ENCODE measurements at regions of chr7 and their contacts with region 1.

Region 1: GRCh38 chr7:151408839-151409666 is 785 bp downstream of the WDR86 start:
- DNase-seq: peak in 1 of 2 experiments; percentile 75
- H3K4me3 ChIP-seq: peak overlapping the region; percentile 69 to 84 (median 80)
- H3K27ac ChIP-seq: no peak overlapping the region
- H3K4me1 ChIP-seq: peaks cover 0 to 22% (median 16%) of the 10 kb centered on the region in 4 experiments; a peak in 6 of 7 replicates
- H3K27me3 ChIP-seq: peaks cover 0 to 25% (median 15%) of the 10 kb centered on the region in 4 experiments; a peak in 5 of 7 replicates
- CTCF ChIP-seq: no peak
- EP300 ChIP-seq: no peak
- POLR2A ChIP-seq: peak in 1 of 2 experiments; percentile 37; a peak in 2 of 3 replicates
- RAD21 ChIP-seq: no peak

Region 2: DNA sequence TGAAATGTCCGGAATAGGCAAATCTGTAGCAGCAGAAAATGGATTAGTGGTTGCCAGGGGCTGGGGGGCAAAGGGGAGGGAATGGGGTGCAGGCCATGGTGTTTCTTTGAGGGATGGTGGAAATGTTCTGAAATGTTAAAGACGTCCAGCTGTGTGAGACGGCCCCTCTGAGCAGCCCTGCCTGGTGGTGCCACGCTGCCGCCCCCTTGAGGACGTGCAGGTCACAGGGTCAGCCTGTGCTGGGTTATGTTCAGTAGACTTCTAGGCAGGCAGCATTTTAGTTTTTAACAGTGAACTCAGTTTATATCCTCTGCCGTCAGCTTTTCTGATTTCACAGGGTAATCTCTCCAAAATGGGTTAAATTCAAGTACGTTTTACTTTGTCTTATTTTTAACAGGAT is 58.0 kb before region 1 on chr7:
- CTCF ChIA-PET with region 1: no interaction called
- POLR2A ChIA-PET with region 1: no interaction called
- DNase-seq: peak in 1 of 2 experiments; percentile 77
- H3K4me3 ChIP-seq: no peak overlapping the region
- H3K27ac ChIP-seq: no peak overlapping the region
- H3K4me1 ChIP-seq: no peaks in the 10 kb centered on the region
- H3K27me3 ChIP-seq: no peaks in the 10 kb centered on the region
- CTCF ChIP-seq: peak; percentile 76 to 95 (median 79)
- EP300 ChIP-seq: no peak
- POLR2A ChIP-seq: no peak
- RAD21 ChIP-seq: peak; percentile 54 to 61

Region 3: GRCh38 chr7:151439855-151440798 is 31.1 kb after region 1 on chr7 and contains the start of gene CRYGN:
- CTCF ChIA-PET with region 1: interaction called, 11 read pairs
- POLR2A ChIA-PET with region 1: interaction called, 7 read pairs
- DNase-seq: peak in 1 of 2 experiments; percentile 79
- H3K4me3 ChIP-seq: peak within 1 kb of the TSS; percentile 37 to 66 (median 57)
- H3K27ac ChIP-seq: no peak within 1 kb of the TSS; the same call in 1 of the 2 replicates
- H3K4me1 ChIP-seq: peaks cover 0 to 17% (median 6%) of the 10 kb centered on the region in 4 experiments; a peak in 6 of 7 replicates
- H3K27me3 ChIP-seq: peaks cover 0 to 7% (median 6%) of the 10 kb centered on the region in 4 experiments; a peak in 4 of 7 replicates
- CTCF ChIP-seq: no peak
- EP300 ChIP-seq: no peak
- POLR2A ChIP-seq: no peak
- RAD21 ChIP-seq: no peak
- total RNA-seq, gene CRYGN: 1.0 and 1.6 TPM in 2 replicates

Measured in H1 (cell line).